ENCODE measurements at regions of chr2 and their contacts with region 1.

Region 1: DNA sequence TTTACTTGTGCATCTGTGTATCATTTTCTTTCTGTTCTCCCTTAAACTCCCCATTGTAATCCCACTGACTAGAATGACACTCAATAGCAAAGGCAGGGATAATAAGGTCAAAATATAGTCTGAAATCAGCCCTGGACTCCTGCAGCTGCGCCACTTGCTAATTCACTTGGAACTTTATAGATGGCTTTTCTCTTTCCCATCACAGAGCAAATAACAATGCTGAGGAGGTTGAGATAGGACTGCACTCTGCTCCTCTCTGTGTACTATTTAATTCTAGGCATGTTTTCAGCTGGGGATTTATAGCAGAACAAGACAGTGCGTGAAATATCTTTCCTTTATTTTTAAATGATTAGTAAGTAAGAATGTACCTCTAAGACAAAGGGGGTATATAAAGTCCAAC is 324.2 kb downstream of the LNPK start:
- DNase-seq: no peak
- ATAC-seq: no peak
- H3K4me3 Mint-ChIP-seq: no peak overlapping the region
- H3K27ac Mint-ChIP-seq: no peak overlapping the region
- H3K4me1 Mint-ChIP-seq: no peaks in the 10 kb centered on the region
- H3K27me3 Mint-ChIP-seq: no peaks in the 10 kb centered on the region
- CTCF ChIP-seq: no peak

Region 2: GRCh38 chr2:175004980-175005732 is 672.7 kb before region 1 on chr2 and contains the start of gene CHN1:
- CTCF ChIA-PET with region 1: no interaction called
- POLR2A ChIA-PET with region 1: no interaction called
- intact Hi-C with region 1: no loop called
- DNase-seq: peak; percentile 40
- ATAC-seq: peak; percentile 88
- H3K4me3 Mint-ChIP-seq: peak within 1 kb of the TSS; percentile 82
- H3K27ac Mint-ChIP-seq: no peak within 1 kb of the TSS
- H3K4me1 Mint-ChIP-seq: peaks cover 7% of the 10 kb centered on the region
- H3K27me3 Mint-ChIP-seq: peaks cover 43% of the 10 kb centered on the region
- CTCF ChIP-seq: no peak
- total RNA-seq, gene CHN1: 0.61 and 0.80 TPM in 2 replicates

Region 3: GRCh38 chr2:175690113-175690837 is 12.4 kb after region 1 on chr2:
- CTCF ChIA-PET with region 1: interaction called, 14 read pairs
- POLR2A ChIA-PET with region 1: no interaction called
- intact Hi-C with region 1: no loop called
- DNase-seq: no peak
- ATAC-seq: no peak
- H3K4me3 Mint-ChIP-seq: no peak overlapping the region
- H3K27ac Mint-ChIP-seq: no peak overlapping the region
- H3K4me1 Mint-ChIP-seq: no peaks in the 10 kb centered on the region
- H3K27me3 Mint-ChIP-seq: peaks cover 1% of the 10 kb centered on the region
- CTCF ChIP-seq: no peak

Measured in activated B cell treated with CpG ODN at 0.5 μM for 24 hours (primary cell).